HepG2 (cell line): ENCODE measurements at regions of chr11 and their contacts with region 1.

Region 1: DNA sequence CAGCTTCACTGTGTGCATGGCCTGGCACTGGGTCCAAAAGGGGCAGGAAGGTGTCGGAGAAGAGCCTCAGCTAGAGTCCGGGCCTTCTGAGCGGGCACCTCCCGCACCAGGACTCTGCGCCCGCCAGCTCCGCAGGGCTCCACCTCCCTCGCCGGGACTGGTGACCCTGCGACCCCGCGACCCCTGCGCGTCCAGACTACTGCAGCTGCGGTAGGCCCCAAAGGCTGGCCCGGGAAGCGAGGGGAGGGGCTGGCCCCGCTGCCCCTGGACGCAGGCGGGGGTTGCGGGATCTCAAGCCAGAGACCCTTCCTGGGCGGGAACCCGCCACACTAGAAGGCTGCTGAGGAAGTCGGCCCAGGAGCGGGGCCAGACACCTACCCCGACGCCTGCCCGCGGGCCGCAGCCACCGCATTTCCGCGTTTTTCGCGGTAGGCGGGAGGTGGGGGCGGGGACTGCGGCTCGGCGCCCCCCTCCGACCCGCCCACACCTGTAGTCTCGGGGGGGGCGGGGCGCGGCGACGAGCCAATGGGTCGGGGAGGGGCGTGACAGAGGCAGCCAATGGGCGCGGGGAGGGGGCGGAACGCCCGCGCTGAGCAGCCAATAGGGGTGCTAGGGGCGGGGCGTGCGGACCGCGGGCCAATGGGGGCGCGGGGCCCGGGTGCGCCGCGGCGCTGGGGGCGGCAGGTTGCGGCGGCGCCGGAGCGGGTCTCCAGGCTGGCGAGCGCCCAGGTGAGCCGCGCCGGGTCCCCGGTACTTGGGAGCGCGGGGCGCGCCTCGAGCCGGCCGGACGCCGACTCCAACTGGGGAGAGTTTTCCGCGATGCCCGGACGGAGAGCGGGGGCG is at the starts of genes LMNTD2 and RASSF7:
- DNase-seq: peak; percentile 75
- ATAC-seq: peak; percentile 56
- H3K4me3 ChIP-seq: peak within 1 kb of the TSS; percentile 80 to 95 (median 92)
- H3K27ac ChIP-seq: peak within 1 kb of the TSS; percentile 93
- H3K4me1 ChIP-seq: peaks cover 75% of the 10 kb centered on the region
- H3K27me3 ChIP-seq: no peaks in the 10 kb centered on the region
- CTCF ChIP-seq: no peak
- EP300 ChIP-seq: no peak
- POLR2A ChIP-seq: peak in 1 of 2 experiments; percentile 69; a peak in 2 of 4 replicates
- RAD21 ChIP-seq: no peak
- total RNA-seq, gene LMNTD2: 0.25 and 1.1 TPM in 2 replicates
- total RNA-seq, gene RASSF7: 13.1 and 20.2 TPM in 2 replicates

Region 2: GRCh38 chr11:382081-382629 is 178.4 kb before region 1 on chr11:
- CTCF ChIA-PET with region 1: no interaction called
- POLR2A ChIA-PET with region 1: no interaction called
- in situ Hi-C with region 1: no loop called
- intact Hi-C with region 1: no loop called
- DNase-seq: no peak
- ATAC-seq: no peak
- H3K4me3 ChIP-seq: no peak overlapping the region
- H3K27ac ChIP-seq: no peak overlapping the region
- H3K4me1 ChIP-seq: peaks cover 7% of the 10 kb centered on the region; the same call in 1 of the 2 replicates
- H3K27me3 ChIP-seq: peaks cover 1 to 11% of the 10 kb centered on the region in 2 experiments; a peak in 3 of 5 replicates
- CTCF ChIP-seq: no peak
- EP300 ChIP-seq: no peak
- POLR2A ChIP-seq: no peak
- RAD21 ChIP-seq: no peak

Region 3: DNA sequence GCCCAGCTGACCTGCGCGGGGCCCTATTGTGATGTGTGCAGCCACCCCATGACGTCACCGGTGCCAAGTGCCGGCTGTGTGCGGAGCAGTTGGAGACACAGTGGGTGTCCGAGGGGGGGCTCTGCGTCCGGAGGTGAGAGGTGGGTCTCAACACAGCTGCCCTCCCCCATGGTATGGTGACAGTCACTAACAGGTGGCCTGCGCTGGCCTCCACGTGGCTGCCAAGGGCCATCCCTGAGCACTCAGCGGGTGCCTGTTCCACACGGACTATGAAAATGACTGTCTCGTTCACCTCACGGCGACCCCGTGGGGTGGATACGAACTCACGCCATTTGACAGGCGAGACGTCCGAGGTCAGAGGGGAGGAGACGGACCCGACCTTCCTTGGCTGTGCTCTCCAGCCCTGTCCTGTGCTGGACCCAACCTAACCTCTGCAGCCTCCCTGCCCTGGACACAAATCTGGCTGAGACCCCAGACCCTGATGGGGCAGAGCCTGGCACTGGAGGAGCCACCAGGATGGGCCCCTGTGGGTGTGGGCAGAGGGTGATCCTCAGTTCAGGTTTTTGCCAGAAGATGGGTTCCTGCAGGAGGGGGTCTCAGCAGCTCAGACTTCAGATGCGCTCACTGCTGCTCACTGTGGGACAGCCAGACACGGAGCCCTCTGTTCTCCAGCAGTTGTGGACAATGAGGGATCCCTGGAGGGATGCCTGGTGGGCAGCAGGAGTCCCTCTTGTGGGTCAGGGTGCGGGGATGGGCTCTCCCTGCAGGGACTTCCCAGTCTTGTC is 31.5 kb before region 1 on chr11:
- CTCF ChIA-PET with region 1: no interaction called
- POLR2A ChIA-PET with region 1: no interaction called
- in situ Hi-C with region 1: no loop called
- intact Hi-C with region 1: no loop called
- DNase-seq: no peak
- ATAC-seq: peak; percentile 17
- H3K4me3 ChIP-seq: no peak overlapping the region
- H3K27ac ChIP-seq: no peak overlapping the region
- H3K4me1 ChIP-seq: peaks cover 16% of the 10 kb centered on the region
- H3K27me3 ChIP-seq: 0 out of 5 replicates have a peak, but pooled peaks cover 0 to 1% of the 10 kb centered on the region in 2 experiments
- CTCF ChIP-seq: no peak
- EP300 ChIP-seq: no peak
- POLR2A ChIP-seq: no peak
- RAD21 ChIP-seq: no peak

Region 4: DNA sequence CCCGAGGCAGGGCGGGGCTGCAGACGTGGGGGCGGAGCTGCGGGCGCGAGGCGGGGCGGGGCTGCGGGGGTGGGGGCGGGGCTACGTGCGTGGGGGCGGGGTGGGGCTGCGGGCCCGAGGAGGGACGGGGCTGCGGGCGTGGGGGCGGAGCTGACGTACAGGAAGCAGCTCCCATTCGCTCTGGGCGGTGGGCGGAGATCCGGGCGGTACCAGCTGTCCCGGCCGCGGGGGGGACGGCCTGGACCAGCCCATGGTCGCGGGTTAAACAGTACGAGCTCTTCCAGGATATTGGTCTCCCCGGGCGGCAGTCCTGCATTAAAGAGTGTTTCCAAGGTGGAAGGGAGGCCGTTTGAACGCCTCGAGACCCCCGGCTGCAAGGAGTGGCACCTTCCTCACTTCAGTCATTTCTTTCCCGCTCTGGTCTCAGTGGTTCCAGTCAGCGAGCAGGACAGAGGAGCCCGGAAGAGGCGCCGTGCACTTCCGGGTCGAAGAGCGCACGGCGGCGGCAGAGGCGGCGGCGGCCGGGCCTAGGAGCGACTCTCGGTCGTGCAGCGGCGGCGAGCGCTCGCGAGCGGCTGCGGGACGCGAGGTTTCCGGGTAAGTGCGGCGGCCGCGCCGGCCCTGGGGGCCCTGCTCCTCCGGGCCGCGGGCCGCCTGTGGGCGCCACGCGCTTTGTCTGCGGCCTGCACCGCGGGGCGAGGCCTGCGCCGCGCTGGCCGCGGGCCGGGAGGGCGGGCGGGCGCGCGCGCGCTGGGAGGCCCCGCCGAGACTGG is 15.7 kb after region 1 on chr11 and contains the start of gene PHRF1:
- CTCF ChIA-PET with region 1: no interaction called
- POLR2A ChIA-PET with region 1: interaction called, 32 read pairs
- in situ Hi-C with region 1: no loop called
- intact Hi-C with region 1: no loop called
- DNase-seq: peak; percentile 88
- ATAC-seq: peak; percentile 67
- H3K4me3 ChIP-seq: peak within 1 kb of the TSS; percentile 78 to 100 (median 92)
- H3K27ac ChIP-seq: peak within 1 kb of the TSS; percentile 100
- H3K4me1 ChIP-seq: peaks cover 65% of the 10 kb centered on the region
- H3K27me3 ChIP-seq: no peaks in the 10 kb centered on the region; a peak in 2 of 5 replicates
- CTCF ChIP-seq: no peak
- EP300 ChIP-seq: 0 out of 4 replicates have a peak, but pooled peaks of 1 of the 2 experiments have one; percentile 19
- POLR2A ChIP-seq: peak in 1 of 2 experiments; percentile 85; a peak in 2 of 4 replicates
- RAD21 ChIP-seq: no peak; the same call in 1 of the 2 replicates
- total RNA-seq, gene PHRF1: 13.7 and 16.7 TPM in 2 replicates